Esophagus squamous epithelium (tissue), 5 donors: ENCODE measurements at regions of chr18 and their contacts with region 1.

Region 1: DNA sequence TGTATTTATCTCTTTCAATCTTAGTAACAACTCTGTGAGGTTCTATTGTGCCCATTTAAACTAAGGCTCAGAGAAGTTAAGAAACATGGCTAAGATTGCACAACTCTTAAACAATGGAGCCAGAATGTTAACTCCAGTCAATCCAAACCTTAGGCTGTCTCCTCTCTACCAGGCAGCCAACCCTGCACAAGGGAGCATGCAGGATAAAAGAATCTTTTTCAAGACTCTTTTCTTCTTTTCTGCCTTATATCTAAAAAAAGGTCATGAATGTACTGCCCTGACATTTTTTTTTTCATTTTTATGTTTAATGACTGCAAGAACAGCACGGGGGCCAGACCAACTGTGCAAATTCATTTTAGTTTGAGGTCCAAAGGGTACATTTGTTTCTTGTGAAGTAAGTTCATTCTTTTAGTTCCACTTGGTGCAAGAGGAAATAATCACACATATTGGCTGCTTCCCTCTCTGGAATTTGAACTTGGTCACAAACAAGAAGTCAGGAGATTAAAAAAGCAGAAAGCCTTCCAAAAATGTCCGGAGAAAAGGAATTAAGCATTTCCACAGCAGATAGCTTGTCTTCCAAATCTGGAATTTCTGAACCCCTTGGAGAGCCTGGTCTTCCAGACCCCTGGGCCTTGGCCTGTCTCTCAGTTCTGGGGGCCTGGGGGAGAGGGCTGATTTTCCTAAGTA is 96.0 kb upstream of the RIOK3 start:
- DNase-seq: no peak
- H3K4me3 ChIP-seq: no peak overlapping the region
- H3K27ac ChIP-seq: peak overlapping the region; percentile 40 to 87 (median 68)
- H3K4me1 ChIP-seq: peaks cover 0 to 42% (median 17%) of the 10 kb centered on the region in 3 donors
- H3K27me3 ChIP-seq: no peaks in the 10 kb centered on the region
- CTCF ChIP-seq: no peak
- POLR2A ChIP-seq: no peak

Region 2: DNA sequence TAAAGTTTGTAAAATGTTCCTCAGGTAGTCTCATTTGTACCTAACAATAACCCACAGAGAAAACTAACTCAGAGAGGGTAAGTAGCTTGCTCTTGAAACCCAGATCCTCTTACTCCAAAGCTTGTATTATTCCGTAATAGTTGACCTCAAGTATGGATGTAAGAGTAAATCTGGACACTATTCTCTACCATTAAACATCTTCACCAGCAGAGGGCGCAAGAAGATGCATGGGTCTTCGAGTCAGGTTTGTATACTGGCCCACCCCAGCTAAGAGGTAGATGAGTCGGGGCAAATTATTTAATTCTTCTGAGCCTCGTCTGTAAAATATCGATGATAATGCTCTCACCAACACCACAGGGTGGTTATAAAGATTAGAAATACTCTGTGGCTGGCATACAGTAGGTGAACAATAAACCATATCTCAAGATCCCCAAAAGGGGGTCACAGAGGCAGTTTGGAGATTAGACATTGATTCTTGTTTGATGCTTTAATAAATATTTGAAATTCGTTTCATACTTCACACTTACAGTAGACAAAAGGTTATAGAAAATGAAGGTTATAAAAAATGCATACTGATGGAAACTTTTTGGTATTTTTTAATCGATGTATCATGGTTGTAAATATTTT is 225.3 kb before region 1 on chr18:
- intact Hi-C with region 1: loop called (anchors 10 kb)
- DNase-seq: no peak
- H3K4me3 ChIP-seq: no peak overlapping the region
- H3K27ac ChIP-seq: no peak overlapping the region
- H3K4me1 ChIP-seq: peaks cover 10 to 30% (median 12%) of the 10 kb centered on the region in 3 donors
- H3K27me3 ChIP-seq: peaks cover 0 to 17% (median 0%) of the 10 kb centered on the region in 4 donors
- CTCF ChIP-seq: peak; percentile 69 to 84 (median 82)
- POLR2A ChIP-seq: no peak

Region 3: GRCh38 chr18:23231340-23232021 is 125.6 kb before region 1 on chr18:
- intact Hi-C with region 1: loop called (anchors 10 kb)
- DNase-seq: peak; percentile 37
- H3K4me3 ChIP-seq: no peak overlapping the region
- H3K27ac ChIP-seq: peak overlapping the region; percentile 33 to 83 (median 71)
- H3K4me1 ChIP-seq: peaks cover 23 to 60% (median 41%) of the 10 kb centered on the region in 3 donors
- H3K27me3 ChIP-seq: no peaks in the 10 kb centered on the region
- CTCF ChIP-seq: no peak
- POLR2A ChIP-seq: no peak

Region 4: GRCh38 chr18:23662309-23663263 is 305.5 kb after region 1 on chr18 and contains the start of gene ANKRD29:
- intact Hi-C with region 1: no loop called
- DNase-seq: no peak
- H3K4me3 ChIP-seq: peak within 1 kb of the TSS; percentile 52 to 83 (median 76)
- H3K27ac ChIP-seq: peak within 1 kb of the TSS; percentile 47 to 81 (median 74)
- H3K4me1 ChIP-seq: peaks cover 0 to 29% (median 6%) of the 10 kb centered on the region in 3 donors
- H3K27me3 ChIP-seq: peaks cover 0 to 35% (median 0%) of the 10 kb centered on the region in 4 donors
- CTCF ChIP-seq: no peak
- POLR2A ChIP-seq: no peak
- total RNA-seq, gene ANKRD29: 2.9 to 10.8 (median 9.2) TPM